HCT116 (cell line): ENCODE measurements at regions of chr15 and their contacts with region 1.

Region 1: GRCh38 chr15:40421246-40422157 is 15.9 kb downstream of the IVD start:
- DNase-seq: peak; percentile 32
- ATAC-seq: peak; percentile 94
- H3K4me3 ChIP-seq: no peak overlapping the region
- H3K27ac ChIP-seq: peak overlapping the region; percentile 55; the same call in 1 of the 2 replicates
- H3K4me1 ChIP-seq: peaks cover 16 to 22% of the 10 kb centered on the region in 2 experiments
- H3K27me3 ChIP-seq: no peaks in the 10 kb centered on the region
- CTCF ChIP-seq: peak; percentile 81 to 88 (median 86); a peak in 5 of 6 replicates
- POLR2A ChIP-seq: no peak
- RAD21 ChIP-seq: peak; percentile 91

Region 2: GRCh38 chr15:40217159-40217824 is 204.2 kb before region 1 on chr15:
- CTCF ChIA-PET with region 1: interaction called, 4 read pairs
- POLR2A ChIA-PET with region 1: no interaction called
- RAD21 ChIA-PET with region 1: interaction called in 1 of 2 experiments, 6 read pairs
- intact Hi-C with region 1: loop called (anchors 5 kb)
- DNase-seq: peak; percentile 68
- ATAC-seq: peak; percentile 99
- H3K4me3 ChIP-seq: no peak overlapping the region
- H3K27ac ChIP-seq: peak overlapping the region; percentile 32; the same call in 1 of the 2 replicates
- H3K4me1 ChIP-seq: 0 out of 4 replicates have a peak, but pooled peaks cover 0 to 3% of the 10 kb centered on the region in 2 experiments
- H3K27me3 ChIP-seq: no peaks in the 10 kb centered on the region
- CTCF ChIP-seq: peak; percentile 65 to 99 (median 86)
- POLR2A ChIP-seq: no peak
- RAD21 ChIP-seq: peak; percentile 91

Region 3: GRCh38 chr15:40323239-40323952 is 98.1 kb before region 1 on chr15 and contains the start of gene INAFM2:
- CTCF ChIA-PET with region 1: interaction called, 7 read pairs
- POLR2A ChIA-PET with region 1: no interaction called
- RAD21 ChIA-PET with region 1: no interaction called
- intact Hi-C with region 1: loop called (anchors 1 kb)
- DNase-seq: peak; percentile 81
- ATAC-seq: peak; percentile 92
- H3K4me3 ChIP-seq: peak within 1 kb of the TSS; percentile 47 to 58
- H3K27ac ChIP-seq: peak within 1 kb of the TSS; percentile 39; the same call in 1 of the 2 replicates
- H3K4me1 ChIP-seq: peaks cover 4 to 18% of the 10 kb centered on the region in 2 experiments; a peak in 3 of 4 replicates
- H3K27me3 ChIP-seq: no peaks in the 10 kb centered on the region
- CTCF ChIP-seq: peak in 2 of 3 experiments; percentile 27 to 45; a peak in 4 of 6 replicates
- POLR2A ChIP-seq: no peak
- RAD21 ChIP-seq: no peak
- total RNA-seq, gene INAFM2: 8.8 TPM

Region 4: GRCh38 chr15:40344631-40345120 is 76.8 kb before region 1 on chr15:
- CTCF ChIA-PET with region 1: interaction called, 37 read pairs
- POLR2A ChIA-PET with region 1: no interaction called
- RAD21 ChIA-PET with region 1: interaction called, 3 to 7 read pairs
- intact Hi-C with region 1: loop called (anchors 1 kb)
- DNase-seq: no peak
- ATAC-seq: peak; percentile 55
- H3K4me3 ChIP-seq: no peak overlapping the region
- H3K27ac ChIP-seq: no peak overlapping the region
- H3K4me1 ChIP-seq: peaks cover 18 to 72% of the 10 kb centered on the region in 2 experiments
- H3K27me3 ChIP-seq: no peaks in the 10 kb centered on the region
- CTCF ChIP-seq: peak in 2 of 3 experiments; percentile 85 to 86; a peak in 4 of 6 replicates
- POLR2A ChIP-seq: no peak
- RAD21 ChIP-seq: no peak

Region 5: DNA sequence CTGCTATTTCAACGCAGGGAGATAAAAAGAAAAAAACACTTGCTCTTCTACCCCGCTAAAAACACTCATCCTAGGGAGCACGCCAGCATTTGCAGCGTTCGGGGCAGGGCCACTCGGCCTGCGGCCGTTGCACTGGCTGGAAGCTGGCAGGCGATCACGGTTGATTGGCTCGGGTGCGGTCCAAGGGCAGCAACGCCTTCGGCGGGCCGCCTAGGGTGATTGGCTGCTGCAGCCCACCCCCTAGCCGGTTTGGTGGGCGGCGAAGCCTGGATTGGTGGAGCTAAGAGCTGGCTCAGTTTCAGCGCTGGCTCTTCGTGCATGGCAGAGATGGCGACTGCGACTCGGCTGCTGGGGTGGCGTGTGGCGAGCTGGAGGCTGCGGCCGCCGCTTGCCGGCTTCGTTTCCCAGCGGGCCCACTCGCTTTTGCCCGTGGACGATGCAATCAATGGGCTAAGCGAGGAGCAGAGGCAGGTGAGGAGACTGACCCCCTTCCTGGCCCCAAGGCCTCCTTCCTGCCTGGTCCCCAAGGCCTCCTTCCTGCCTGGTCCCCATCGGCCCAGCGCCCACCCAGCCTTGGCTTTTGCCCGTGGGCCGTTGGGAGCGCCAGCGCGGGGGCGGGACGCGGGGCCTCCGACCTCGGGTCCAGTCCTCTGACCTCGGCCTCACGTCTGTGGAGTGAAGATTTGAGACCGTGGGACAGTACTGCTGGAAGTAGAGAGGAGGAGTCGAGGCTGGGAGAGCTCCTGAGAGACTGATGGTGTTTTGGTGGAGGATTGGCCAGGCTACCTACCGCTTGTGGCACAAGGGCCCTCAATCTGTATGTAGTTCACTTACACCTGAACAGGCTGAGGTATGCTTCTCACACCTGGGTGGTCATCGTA is 15.8 kb before region 1 on chr15 and contains the start of gene IVD:
- CTCF ChIA-PET with region 1: interaction called, 12 read pairs
- POLR2A ChIA-PET with region 1: interaction called, 8 read pairs
- RAD21 ChIA-PET with region 1: no interaction called
- intact Hi-C with region 1: no loop called
- DNase-seq: peak; percentile 88
- ATAC-seq: peak; percentile 99
- H3K4me3 ChIP-seq: peak within 1 kb of the TSS; percentile 83 to 97
- H3K27ac ChIP-seq: peak within 1 kb of the TSS; percentile 65
- H3K4me1 ChIP-seq: peaks cover 4 to 16% of the 10 kb centered on the region in 2 experiments; a peak in 3 of 4 replicates
- H3K27me3 ChIP-seq: no peaks in the 10 kb centered on the region
- CTCF ChIP-seq: no peak
- POLR2A ChIP-seq: peak; percentile 65
- RAD21 ChIP-seq: no peak
- total RNA-seq, gene IVD: 65.6 TPM

Region 6: DNA sequence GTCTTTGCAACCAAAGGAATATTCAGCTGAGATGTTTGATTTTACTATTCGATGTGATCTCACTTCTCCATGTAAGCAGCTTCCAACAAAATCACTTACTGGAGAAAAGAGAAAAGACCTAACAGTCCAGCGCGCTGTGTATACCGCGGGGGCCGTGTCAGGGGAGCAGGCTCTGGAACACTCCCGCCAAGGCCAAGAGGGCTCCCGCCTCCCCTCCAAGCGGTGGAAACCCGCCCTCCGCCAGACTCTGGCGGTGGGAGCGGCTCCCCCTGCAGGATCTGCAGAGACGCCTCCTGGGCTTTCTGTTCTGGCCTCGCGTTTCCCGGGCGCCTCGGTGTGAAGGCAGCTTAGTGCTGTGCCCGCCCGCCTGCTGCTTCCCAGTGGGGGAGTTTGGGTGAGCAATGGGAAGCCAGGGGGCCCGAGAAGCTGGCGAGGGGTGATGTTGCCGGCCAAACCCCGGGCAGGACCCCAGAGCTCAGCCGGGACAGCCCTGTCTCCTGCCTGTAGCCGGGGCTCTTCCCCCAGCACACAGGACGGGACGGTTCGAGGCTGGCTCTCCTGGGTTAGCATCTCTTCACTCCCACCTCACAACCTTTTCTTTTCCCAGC is 85.6 kb after region 1 on chr15:
- CTCF ChIA-PET with region 1: no interaction called
- POLR2A ChIA-PET with region 1: no interaction called
- RAD21 ChIA-PET with region 1: no interaction called
- intact Hi-C with region 1: no loop called
- DNase-seq: peak; percentile 57
- ATAC-seq: peak; percentile 94
- H3K4me3 ChIP-seq: peak overlapping the region; percentile 18 to 47
- H3K27ac ChIP-seq: no peak overlapping the region
- H3K4me1 ChIP-seq: peaks cover 8 to 23% of the 10 kb centered on the region in 2 experiments
- H3K27me3 ChIP-seq: no peaks in the 10 kb centered on the region
- CTCF ChIP-seq: peak; percentile 69 to 81 (median 73)
- POLR2A ChIP-seq: no peak
- RAD21 ChIP-seq: peak; percentile 75